Activated T-helper 2 cell treated with anti-CD3 and anti-CD28 coated beads, Interferon-gamma antibody, Interleukin-2, Interleukin-4, amounts not matched to agents 10 μg/mL and 5 μg/mL and 100 μg/mL, durations not matched to agents 14 hours and 24 hours and 36 hours (primary cell): ENCODE measurements at regions of chr17 and their contacts with region 1.

Region 1: DNA sequence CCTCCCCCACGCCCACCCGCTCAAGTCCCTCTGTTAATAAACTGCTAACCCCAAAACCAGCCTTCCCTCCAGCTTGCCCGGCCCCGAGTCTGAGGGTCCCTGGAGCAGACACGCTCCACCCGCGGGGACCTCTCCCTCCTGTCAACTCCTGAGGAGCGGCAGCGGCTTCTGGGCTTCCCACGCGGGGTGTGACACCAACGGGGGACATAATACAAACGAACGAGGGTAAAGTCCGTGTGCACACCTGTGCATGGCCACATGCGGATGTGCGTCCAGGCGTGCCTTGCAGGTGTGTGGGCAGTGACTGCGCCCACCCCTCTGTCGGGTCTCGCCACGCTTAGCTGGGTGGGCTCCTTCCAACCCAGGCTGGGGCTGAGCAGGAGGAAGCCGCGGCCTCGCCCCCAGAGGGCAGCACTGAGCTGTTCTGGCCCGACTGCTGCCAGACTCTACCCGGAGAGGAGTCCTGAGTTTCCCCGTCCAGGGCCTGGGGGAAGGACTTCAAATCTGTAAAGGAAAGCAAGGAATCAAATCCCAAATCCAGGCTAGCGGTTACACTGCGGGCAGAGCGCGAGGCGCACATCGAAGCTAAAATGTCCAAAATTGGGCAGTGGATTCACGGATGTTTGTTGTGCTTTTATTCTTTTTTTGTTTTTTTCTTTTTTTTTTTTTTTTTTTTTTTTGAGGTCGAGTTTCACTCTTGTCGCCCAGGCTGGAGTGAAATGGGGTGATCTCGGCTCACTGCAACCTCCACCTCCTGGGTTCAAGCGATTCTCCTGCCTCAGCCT is 24.2 kb upstream of the KRT17 start:
- DNase-seq: peak; percentile 74
- H3K4me3 Mint-ChIP-seq: peak overlapping the region; percentile 51
- H3K27ac Mint-ChIP-seq: peak overlapping the region; percentile 51
- H3K4me1 Mint-ChIP-seq: peaks cover 7% of the 10 kb centered on the region
- H3K27me3 Mint-ChIP-seq: peaks cover 2% of the 10 kb centered on the region

Region 2: DNA sequence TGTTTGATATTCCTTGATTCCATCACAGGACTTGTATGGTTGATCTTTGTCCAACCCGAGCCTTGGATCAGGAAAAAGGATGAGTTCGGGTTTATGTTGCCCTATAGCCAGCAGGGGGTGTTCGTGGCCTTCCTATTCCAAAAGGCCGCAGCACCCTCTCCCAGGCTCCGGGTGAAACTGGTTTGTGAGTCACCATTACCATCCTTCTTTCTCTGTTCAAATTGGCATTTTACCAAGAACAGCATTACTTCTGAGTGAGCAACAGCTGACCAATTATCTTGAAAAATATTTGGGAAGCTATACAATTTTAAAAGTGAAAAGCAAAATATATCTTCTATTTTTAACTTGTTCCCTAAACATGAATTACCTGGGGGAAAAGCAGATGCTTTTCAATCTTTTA is 739.3 kb before region 1 on chr17:
- intact Hi-C with region 1: loop called (anchors 5 kb)
- DNase-seq: peak; percentile 27
- H3K4me3 Mint-ChIP-seq: no peak overlapping the region
- H3K27ac Mint-ChIP-seq: no peak overlapping the region
- H3K4me1 Mint-ChIP-seq: no peaks in the 10 kb centered on the region
- H3K27me3 Mint-ChIP-seq: peaks cover 29% of the 10 kb centered on the region

Region 3: GRCh38 chr17:41417576-41418015 is 231.0 kb before region 1 on chr17:
- intact Hi-C with region 1: loop called (anchors 5 kb)
- DNase-seq: no peak
- H3K4me3 Mint-ChIP-seq: no peak overlapping the region
- H3K27ac Mint-ChIP-seq: no peak overlapping the region
- H3K4me1 Mint-ChIP-seq: no peaks in the 10 kb centered on the region
- H3K27me3 Mint-ChIP-seq: peaks cover 2% of the 10 kb centered on the region